ENCODE measurements at regions of chr10 and their contacts with region 1.

Region 1: GRCh38 chr10:117375360-117376178 is at the start of gene PDZD8:
- DNase-seq: peak; percentile 87
- H3K4me3 Mint-ChIP-seq: peak within 1 kb of the TSS; percentile 94
- H3K27ac Mint-ChIP-seq: peak within 1 kb of the TSS; percentile 81
- H3K4me1 Mint-ChIP-seq: peaks cover 24% of the 10 kb centered on the region
- H3K27me3 Mint-ChIP-seq: peaks cover 33% of the 10 kb centered on the region
- total RNA-seq, gene PDZD8: 20.2 and 24.5 TPM in 2 replicates

Region 2: DNA sequence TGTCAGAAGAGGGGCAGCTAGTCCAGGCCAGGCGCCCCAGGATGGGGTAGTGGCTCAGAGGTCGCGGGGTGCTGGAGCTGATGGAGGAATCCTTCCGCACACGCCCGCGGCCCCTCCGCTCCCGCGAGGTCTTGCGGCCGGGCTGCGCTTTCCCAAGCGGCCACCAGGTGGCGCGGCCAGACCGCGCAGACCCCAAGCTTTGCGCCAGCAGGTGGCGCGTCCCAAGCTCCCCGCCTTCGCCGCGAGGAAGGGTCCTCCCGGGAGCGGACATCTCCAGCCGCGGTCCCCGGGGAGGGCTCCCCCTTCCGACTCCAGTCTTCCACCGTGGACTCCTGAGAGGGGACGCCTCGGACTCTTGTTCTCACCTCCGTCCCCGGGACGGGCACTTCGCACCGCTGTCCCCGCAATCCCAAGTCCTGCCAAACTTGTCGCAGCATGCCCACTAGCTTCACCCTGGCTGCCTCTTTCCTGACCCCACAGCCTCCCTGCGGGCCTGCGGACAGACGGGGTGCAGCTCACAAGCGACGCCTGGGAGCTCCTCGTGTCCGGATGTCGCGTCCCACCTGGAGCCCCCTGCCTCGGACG is 158.9 kb before region 1 on chr10:
- intact Hi-C with region 1: loop called (anchors 2 kb)
- DNase-seq: peak; percentile 62
- H3K4me3 Mint-ChIP-seq: peak overlapping the region; percentile 73
- H3K27ac Mint-ChIP-seq: no peak overlapping the region
- H3K4me1 Mint-ChIP-seq: no peaks in the 10 kb centered on the region
- H3K27me3 Mint-ChIP-seq: peaks cover 16% of the 10 kb centered on the region

Region 3: DNA sequence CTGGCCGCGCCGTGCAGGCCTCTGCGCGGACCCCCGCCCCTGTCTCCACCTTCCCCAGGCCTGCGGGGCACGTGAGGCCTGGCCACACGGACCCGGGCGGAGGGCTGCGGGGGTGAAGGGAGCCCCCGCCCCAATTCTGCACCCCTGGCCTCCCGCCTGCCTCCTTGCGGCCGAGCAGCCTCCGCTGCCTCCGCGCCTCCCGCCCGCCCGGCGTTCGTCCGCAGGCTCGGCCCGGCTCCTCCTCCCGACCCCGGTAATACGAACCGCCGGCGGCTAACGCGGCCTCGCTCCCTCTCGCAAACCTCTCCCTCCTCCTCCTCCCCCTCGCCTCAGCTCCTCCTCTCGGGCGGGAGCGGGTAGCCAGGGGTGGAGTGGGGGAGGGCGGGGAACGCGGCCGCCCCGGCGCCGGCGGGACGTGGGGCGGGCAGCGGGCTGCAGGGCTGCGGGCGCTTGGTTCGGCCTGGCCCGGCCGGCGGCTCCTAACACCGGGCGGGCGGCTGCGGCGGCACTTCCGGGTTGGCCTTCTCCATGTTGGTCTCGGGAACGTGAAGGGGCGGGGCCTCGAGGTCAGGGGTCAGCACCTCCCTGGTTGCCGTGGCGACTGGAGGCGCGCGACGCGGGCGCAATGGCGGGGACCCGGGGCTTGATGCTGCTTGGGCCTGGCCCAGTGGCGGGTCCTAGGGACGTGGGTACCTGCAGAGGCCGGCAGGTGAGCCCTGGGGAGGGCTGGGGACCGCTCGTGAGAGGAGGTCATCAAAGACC is 671.0 kb after region 1 on chr10 and contains the start of gene RAB11FIP2:
- intact Hi-C with region 1: loop called (anchors 1 kb)
- DNase-seq: peak; percentile 91
- H3K4me3 Mint-ChIP-seq: peak within 1 kb of the TSS; percentile 92
- H3K27ac Mint-ChIP-seq: peak within 1 kb of the TSS; percentile 83
- H3K4me1 Mint-ChIP-seq: peaks cover 30% of the 10 kb centered on the region
- H3K27me3 Mint-ChIP-seq: peaks cover 13% of the 10 kb centered on the region
- total RNA-seq, gene RAB11FIP2: 13.0 and 13.1 TPM in 2 replicates

Region 4: DNA sequence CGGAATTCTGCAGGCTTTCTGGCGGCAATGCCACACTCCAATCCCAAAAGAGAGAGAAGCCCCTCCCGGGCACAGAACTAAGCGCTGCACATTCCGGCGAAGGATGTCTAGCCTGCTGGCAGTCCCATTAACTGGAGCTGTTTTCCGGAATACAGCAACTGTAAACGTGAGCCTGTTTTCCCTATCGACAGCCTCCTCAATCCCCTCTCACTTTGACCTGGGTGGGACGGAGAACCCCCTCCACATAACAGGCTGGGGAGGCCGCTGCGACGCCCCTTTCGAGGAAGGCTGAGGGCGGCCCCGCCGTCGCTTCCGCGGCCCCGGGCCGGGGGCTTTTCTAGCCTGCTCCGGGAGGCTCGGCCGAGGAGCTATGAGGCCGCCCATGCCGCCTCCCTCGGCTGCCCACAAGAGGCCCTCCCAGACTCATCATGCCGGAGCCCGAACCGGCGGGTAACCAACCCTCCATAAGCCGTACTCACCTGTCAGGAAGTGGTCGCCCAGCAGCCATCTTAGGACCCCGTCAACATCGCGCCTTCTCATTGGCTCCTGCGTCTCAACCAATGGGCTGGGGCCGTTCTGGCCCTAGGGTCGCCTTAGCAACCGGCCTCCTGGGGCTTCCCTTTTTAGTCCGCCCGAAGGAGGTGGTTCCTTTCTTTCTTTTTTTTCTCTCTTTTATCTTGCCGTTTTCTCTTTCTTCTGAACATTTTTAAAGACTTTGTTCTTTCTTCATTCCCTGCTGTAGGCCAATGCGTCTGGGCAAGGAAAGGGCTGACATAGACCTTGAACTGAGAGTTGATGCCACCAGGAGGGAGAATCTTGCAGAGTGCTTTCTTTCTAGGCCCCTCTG is 966.4 kb after region 1 on chr10 and contains the start of gene FAM204A:
- intact Hi-C with region 1: loop called (anchors 2 kb)
- DNase-seq: peak; percentile 94
- H3K4me3 Mint-ChIP-seq: peak within 1 kb of the TSS; percentile 92
- H3K27ac Mint-ChIP-seq: peak within 1 kb of the TSS; percentile 92
- H3K4me1 Mint-ChIP-seq: peaks cover 32% of the 10 kb centered on the region
- H3K27me3 Mint-ChIP-seq: peaks cover 6% of the 10 kb centered on the region
- total RNA-seq, gene FAM204A: 61.8 and 63.3 TPM in 2 replicates